Activated T-helper 1 cell treated with anti-CD3 and anti-CD28 coated beads, Interleukin-12 subunit alpha, Interleukin-12 subunit beta, Interleukin-2, Interleukin-4 antibody, amounts not matched to agents 30 ng/mL and 10 ng/mL and 1 ng/mL, durations not matched to agents 14 hours and 24 hours and 36 hours (primary cell): ENCODE measurements at regions of chr1 and their contacts with region 1.

Region 1: GRCh38 chr1:247390116-247390791 is 25.7 kb upstream of the NLRP3 start:
- DNase-seq: peak; percentile 72
- H3K4me3 Mint-ChIP-seq: peak overlapping the region; percentile 17
- H3K27ac Mint-ChIP-seq: no peak overlapping the region
- H3K4me1 Mint-ChIP-seq: peaks cover 6% of the 10 kb centered on the region
- H3K27me3 Mint-ChIP-seq: peaks cover 9% of the 10 kb centered on the region

Region 2: DNA sequence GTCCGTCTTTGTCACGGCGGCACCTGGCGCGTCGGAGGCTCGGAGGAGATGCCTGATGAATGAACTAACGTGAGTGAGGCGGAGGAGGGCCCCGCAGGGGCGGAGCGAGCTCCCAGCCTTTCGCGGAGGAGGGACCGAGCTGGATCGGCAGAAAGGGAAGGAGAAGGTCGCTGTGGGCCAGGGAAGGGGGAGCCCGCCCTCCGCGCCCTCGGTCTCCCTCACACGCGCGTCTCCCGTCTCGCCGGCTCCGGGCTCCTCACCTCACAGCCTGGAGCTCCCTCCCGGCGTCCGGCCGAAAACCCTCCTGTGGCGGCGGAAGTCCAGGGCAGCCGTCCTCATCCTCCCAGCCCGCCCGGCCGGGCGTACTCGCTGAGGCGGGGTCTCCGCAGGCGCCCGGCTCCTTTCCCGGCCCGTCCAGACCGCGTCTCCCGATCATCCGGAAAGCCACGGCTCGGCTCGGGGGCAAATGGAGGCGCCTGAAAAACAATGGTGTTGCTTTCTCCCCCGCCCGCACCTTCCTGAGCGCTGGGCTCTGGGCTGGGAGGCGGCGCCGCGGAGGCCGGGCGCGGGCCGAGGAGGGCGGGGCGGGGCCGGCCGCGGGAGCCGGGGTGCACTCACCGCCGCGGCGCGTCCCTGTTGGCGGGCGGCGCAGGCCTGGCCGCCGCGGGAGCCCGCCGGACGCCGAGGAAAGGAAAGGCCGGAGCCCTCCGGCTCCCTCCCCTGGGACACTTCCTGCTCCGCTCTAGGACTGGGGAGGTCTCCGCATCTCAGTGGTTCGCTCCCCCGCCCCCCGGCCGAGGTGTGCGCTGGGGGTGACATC is 58.9 kb before region 1 on chr1 and contains the start of gene ZNF496:
- intact Hi-C with region 1: loop called (anchors 5 kb)
- DNase-seq: peak; percentile 65
- H3K4me3 Mint-ChIP-seq: peak within 1 kb of the TSS; percentile 92
- H3K27ac Mint-ChIP-seq: peak within 1 kb of the TSS; percentile 90
- H3K4me1 Mint-ChIP-seq: peaks cover 21% of the 10 kb centered on the region
- H3K27me3 Mint-ChIP-seq: no peaks in the 10 kb centered on the region
- total RNA-seq, gene ZNF496: 13.8 and 14.8 TPM in 2 replicates

Region 3: GRCh38 chr1:247373721-247374141 is 16.5 kb before region 1 on chr1:
- intact Hi-C with region 1: loop called (anchors 2 kb)
- DNase-seq: peak; percentile 19
- H3K4me3 Mint-ChIP-seq: peak overlapping the region; percentile 35
- H3K27ac Mint-ChIP-seq: no peak overlapping the region
- H3K4me1 Mint-ChIP-seq: no peaks in the 10 kb centered on the region
- H3K27me3 Mint-ChIP-seq: peaks cover 16% of the 10 kb centered on the region

Region 4: DNA sequence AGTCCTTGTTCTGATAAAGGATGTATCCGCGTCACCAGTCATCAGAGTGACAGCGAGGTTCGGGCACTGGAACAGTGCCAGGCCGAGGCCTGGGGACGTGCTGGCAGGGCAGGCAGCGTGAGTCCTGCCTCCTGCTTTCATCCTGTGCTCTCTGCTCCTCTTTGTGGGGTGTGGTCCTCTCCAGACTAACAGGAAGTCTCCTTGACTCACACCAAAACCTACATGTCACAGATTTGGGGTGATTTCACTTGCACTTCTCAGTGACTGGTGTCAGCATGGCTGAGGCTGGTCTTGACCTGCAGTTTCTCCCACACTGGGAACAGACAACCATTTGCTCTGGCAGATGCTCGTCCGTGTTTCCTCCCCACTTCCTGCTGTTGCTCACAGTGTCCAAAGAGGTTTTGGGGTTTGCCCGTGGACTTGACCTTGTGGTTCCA is 16.9 kb after region 1 on chr1:
- intact Hi-C with region 1: loop called (anchors 1 kb)
- DNase-seq: peak; percentile 35
- H3K4me3 Mint-ChIP-seq: peak overlapping the region; percentile 40
- H3K27ac Mint-ChIP-seq: peak overlapping the region; percentile 27
- H3K4me1 Mint-ChIP-seq: peaks cover 34% of the 10 kb centered on the region
- H3K27me3 Mint-ChIP-seq: peaks cover 32% of the 10 kb centered on the region

Region 5: DNA sequence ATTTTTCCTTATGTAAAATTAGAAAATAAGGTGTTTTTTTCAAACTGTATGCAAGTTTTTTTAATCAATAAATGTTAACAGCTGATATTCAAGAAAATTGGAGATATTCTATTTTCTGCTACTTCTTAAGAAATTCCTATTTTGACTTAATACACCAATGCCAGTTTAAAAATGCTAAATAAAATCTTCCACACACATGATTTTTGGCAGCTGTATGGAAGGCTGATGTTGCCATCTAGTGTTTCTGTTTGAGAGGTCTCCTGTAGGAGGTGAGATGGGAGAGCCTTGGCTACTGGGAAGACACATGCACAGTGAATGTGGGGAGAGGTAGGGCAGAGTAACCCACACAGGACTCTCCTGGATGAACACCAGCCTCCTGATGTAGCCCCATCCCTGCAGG is 96.8 kb after region 1 on chr1:
- intact Hi-C with region 1: loop called (anchors 1 kb)
- DNase-seq: no peak
- H3K4me3 Mint-ChIP-seq: no peak overlapping the region
- H3K27ac Mint-ChIP-seq: no peak overlapping the region
- H3K4me1 Mint-ChIP-seq: no peaks in the 10 kb centered on the region
- H3K27me3 Mint-ChIP-seq: peaks cover 4% of the 10 kb centered on the region

Region 6: GRCh38 chr1:247576495-247576894 is 186.2 kb after region 1 on chr1:
- intact Hi-C with region 1: loop called (anchors 1 kb)
- DNase-seq: no peak
- H3K4me3 Mint-ChIP-seq: no peak overlapping the region
- H3K27ac Mint-ChIP-seq: no peak overlapping the region
- H3K4me1 Mint-ChIP-seq: no peaks in the 10 kb centered on the region
- H3K27me3 Mint-ChIP-seq: peaks cover 2% of the 10 kb centered on the region